ENCODE measurements at regions of chr12 and their contacts with region 1.

Region 1: DNA sequence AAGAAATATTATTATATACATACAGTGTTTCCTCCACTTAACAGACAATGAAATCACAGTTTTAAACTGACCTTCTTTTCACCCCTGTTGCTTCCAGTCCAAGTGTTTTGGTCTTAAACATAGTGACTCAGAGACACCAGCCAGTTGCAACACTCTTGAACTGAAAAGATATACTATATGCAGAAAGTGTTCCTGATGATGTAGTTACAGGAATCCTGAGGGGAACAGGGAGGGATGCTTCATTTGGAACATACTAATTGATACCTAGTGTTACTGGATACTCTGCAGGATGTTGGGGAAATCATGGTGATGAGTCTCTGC is 420.8 kb downstream of the CCDC91 start:
- DNase-seq: no peak
- ATAC-seq: peak in 1 of 8 donors; percentile 61
- H3K4me3 ChIP-seq: no peak overlapping the region
- H3K27ac ChIP-seq: no peak overlapping the region
- H3K4me1 ChIP-seq: no peaks in the 10 kb centered on the region
- H3K27me3 ChIP-seq: no peaks in the 10 kb centered on the region
- CTCF ChIP-seq: no peak

Region 2: GRCh38 chr12:28770329-28770728 is 159.3 kb after region 1 on chr12:
- intact Hi-C with region 1: loop called in 1 of 10 experiments (anchors 5 kb)
- DNase-seq: peak in 1 of 2 donors; percentile 71
- ATAC-seq: peak; percentile 80 to 97 (median 96)
- H3K4me3 ChIP-seq: no peak overlapping the region
- H3K27ac ChIP-seq: peak overlapping the region in 9 of 10 donors; percentile 6 to 85 (median 73)
- H3K4me1 ChIP-seq: peaks cover 0 to 34% (median 7%) of the 10 kb centered on the region in 9 donors
- H3K27me3 ChIP-seq: no peaks in the 10 kb centered on the region
- CTCF ChIP-seq: no peak

Measured in heart right ventricle (tissue), 16 donors.